ENCODE measurements at regions of chr17 and their contacts with region 1.

Region 1: DNA sequence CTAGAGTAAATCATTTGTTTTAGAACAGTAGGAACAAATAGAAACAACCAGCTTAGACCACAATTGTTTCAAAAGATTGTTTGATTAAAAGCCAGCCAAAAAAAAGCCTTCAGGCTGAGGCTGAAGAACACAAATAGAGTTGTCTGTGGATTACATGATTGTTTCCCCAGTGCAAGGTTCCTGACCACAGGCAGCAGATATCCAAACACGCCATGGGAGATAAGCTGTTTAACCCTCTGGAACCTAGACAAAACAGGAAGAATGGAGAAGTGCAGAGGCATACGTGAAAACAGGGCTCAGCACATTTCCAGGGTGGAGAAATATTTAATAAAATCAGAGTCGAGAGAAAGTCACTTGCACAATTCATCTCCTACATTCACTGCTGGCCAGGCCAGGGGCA is 21.0 kb downstream of the ATPAF2 start:
- DNase-seq: no peak
- ATAC-seq: no peak
- H3K4me3 ChIP-seq: no peak overlapping the region
- H3K4me3 Mint-ChIP-seq: no peak overlapping the region
- H3K27ac ChIP-seq: no peak overlapping the region
- H3K27ac Mint-ChIP-seq: no peak overlapping the region
- H3K4me1 ChIP-seq: no peaks in the 10 kb centered on the region
- H3K4me1 Mint-ChIP-seq: no peaks in the 10 kb centered on the region
- H3K27me3 ChIP-seq: no peaks in the 10 kb centered on the region
- H3K27me3 Mint-ChIP-seq: no peaks in the 10 kb centered on the region
- CTCF ChIP-seq: no peak

Region 2: GRCh38 chr17:17934214-17934613 is 83.7 kb before region 1 on chr17:
- CTCF ChIA-PET with region 1: no interaction called
- POLR2A ChIA-PET with region 1: no interaction called
- intact Hi-C with region 1: no loop called
- DNase-seq: no peak
- ATAC-seq: no peak
- H3K4me3 ChIP-seq: no peak overlapping the region
- H3K4me3 Mint-ChIP-seq: no peak overlapping the region
- H3K27ac ChIP-seq: no peak overlapping the region
- H3K27ac Mint-ChIP-seq: no peak overlapping the region
- H3K4me1 ChIP-seq: peaks cover 25% of the 10 kb centered on the region
- H3K4me1 Mint-ChIP-seq: peaks cover 57% of the 10 kb centered on the region
- H3K27me3 ChIP-seq: no peaks in the 10 kb centered on the region
- H3K27me3 Mint-ChIP-seq: no peaks in the 10 kb centered on the region
- CTCF ChIP-seq: no peak

Region 3: GRCh38 chr17:17985555-17985954 is 32.4 kb before region 1 on chr17:
- CTCF ChIA-PET with region 1: no interaction called
- POLR2A ChIA-PET with region 1: no interaction called
- intact Hi-C with region 1: loop called in 1 of 2 experiments (anchors 2 kb)
- DNase-seq: no peak
- ATAC-seq: no peak
- H3K4me3 ChIP-seq: no peak overlapping the region
- H3K4me3 Mint-ChIP-seq: no peak overlapping the region
- H3K27ac ChIP-seq: no peak overlapping the region
- H3K27ac Mint-ChIP-seq: no peak overlapping the region
- H3K4me1 ChIP-seq: no peaks in the 10 kb centered on the region
- H3K4me1 Mint-ChIP-seq: no peaks in the 10 kb centered on the region
- H3K27me3 ChIP-seq: no peaks in the 10 kb centered on the region
- H3K27me3 Mint-ChIP-seq: no peaks in the 10 kb centered on the region
- CTCF ChIP-seq: no peak

Region 4: GRCh38 chr17:18045691-18046090 is 27.7 kb after region 1 on chr17:
- CTCF ChIA-PET with region 1: no interaction called
- POLR2A ChIA-PET with region 1: no interaction called
- intact Hi-C with region 1: loop called in 1 of 2 experiments (anchors 1 kb)
- DNase-seq: no peak
- ATAC-seq: no peak
- H3K4me3 ChIP-seq: no peak overlapping the region
- H3K4me3 Mint-ChIP-seq: no peak overlapping the region
- H3K27ac ChIP-seq: no peak overlapping the region
- H3K27ac Mint-ChIP-seq: no peak overlapping the region
- H3K4me1 ChIP-seq: peaks cover 3% of the 10 kb centered on the region
- H3K4me1 Mint-ChIP-seq: peaks cover 21% of the 10 kb centered on the region
- H3K27me3 ChIP-seq: no peaks in the 10 kb centered on the region
- H3K27me3 Mint-ChIP-seq: no peaks in the 10 kb centered on the region
- CTCF ChIP-seq: no peak

Region 5: DNA sequence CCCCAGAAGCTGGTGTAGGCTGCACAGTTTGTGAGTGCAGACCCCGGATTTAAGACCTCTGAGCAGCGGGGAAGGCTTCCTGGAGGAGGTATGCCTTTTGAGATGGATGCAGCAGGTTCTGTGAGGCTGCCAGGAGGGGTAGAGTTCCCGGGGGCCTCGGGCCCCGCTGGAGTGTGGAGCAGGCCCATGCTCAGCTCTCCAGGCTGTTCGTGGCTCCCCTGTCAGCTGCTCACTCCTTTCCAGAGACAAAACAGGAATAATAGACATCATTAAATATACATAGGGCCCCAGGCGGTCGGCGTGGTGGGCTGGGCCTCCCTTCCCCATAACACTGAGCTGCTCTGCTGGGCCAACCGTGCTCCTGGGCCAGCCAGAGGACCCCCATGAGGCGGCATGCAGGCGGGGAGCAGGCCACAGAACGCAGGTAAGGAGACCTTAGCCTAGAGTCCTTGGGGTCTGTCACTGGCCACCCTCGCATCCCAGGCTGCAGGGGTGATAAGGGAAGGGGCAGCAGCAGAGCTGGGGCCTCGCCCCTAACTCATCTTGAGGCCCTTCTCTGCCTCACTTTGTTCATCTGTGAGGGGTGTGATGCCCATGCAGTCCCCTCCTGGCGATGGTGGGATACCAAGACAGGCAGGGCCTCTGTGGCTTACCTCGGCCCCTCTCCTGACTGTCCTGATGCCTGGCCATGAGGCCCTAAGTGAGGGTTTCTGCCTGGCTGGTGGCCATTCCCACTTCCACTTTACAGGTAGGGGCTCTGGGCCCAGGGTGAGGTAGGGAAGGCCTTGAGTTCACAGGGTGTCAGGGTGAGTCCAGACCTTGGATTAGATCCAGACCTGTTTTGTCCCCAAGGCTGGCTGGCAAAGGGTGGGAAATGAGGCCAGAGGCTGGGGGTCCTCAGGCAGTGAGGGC is 90.7 kb after region 1 on chr17 and contains the start of gene MYO15A:
- CTCF ChIA-PET with region 1: no interaction called
- POLR2A ChIA-PET with region 1: no interaction called
- intact Hi-C with region 1: no loop called
- DNase-seq: no peak
- ATAC-seq: no peak
- H3K4me3 ChIP-seq: no peak within 1 kb of the TSS
- H3K4me3 Mint-ChIP-seq: no peak within 1 kb of the TSS
- H3K27ac ChIP-seq: no peak within 1 kb of the TSS
- H3K27ac Mint-ChIP-seq: no peak within 1 kb of the TSS
- H3K4me1 ChIP-seq: no peaks in the 10 kb centered on the region
- H3K4me1 Mint-ChIP-seq: no peaks in the 10 kb centered on the region
- H3K27me3 ChIP-seq: no peaks in the 10 kb centered on the region
- H3K27me3 Mint-ChIP-seq: no peaks in the 10 kb centered on the region
- CTCF ChIP-seq: no peak
- total RNA-seq, gene MYO15A: 1.2 to 1.6 TPM